ENCODE measurements at regions of chr10 and their contacts with region 1.

Region 1: GRCh38 chr10:8829588-8829987 is 775.1 kb downstream of the GATA3 start:
- DNase-seq: no peak
- H3K4me3 ChIP-seq: no peak overlapping the region
- H3K27ac ChIP-seq: no peak overlapping the region
- H3K4me1 ChIP-seq: peaks cover 2% of the 10 kb centered on the region
- H3K27me3 ChIP-seq: no peaks in the 10 kb centered on the region
- CTCF ChIP-seq: no peak
- POLR2A ChIP-seq: no peak

Region 2: DNA sequence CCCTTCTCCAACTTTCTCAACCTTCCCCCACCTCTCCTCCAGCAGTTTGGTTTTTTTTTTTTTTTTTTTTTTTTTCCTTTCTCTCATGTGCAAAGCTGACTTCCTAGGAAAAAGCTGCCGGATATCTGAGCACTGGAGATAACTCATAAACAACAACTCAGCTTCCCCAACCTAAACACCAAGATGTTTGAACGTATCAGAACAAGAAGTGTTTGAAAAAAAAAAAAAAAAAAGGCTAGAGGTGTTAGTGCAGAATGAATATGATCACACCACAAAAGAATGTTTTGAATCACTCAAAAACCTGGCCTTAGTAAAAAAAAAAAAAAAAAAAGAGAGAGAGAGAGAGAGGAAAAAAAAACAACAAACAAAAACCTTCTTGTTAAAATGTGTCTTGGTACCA is 763.9 kb before region 1 on chr10:
- CTCF ChIA-PET with region 1: no interaction called
- POLR2A ChIA-PET with region 1: no interaction called
- dilution Hi-C with region 1: no loop called
- intact Hi-C with region 1: loop called (anchors 1 kb)
- DNase-seq: peak; percentile 98
- H3K4me3 ChIP-seq: peak overlapping the region in 1 of 3 experiments; percentile 37
- H3K27ac ChIP-seq: peak overlapping the region; percentile 86
- H3K4me1 ChIP-seq: peaks cover 63% of the 10 kb centered on the region
- H3K27me3 ChIP-seq: no peaks in the 10 kb centered on the region
- CTCF ChIP-seq: no peak
- POLR2A ChIP-seq: peak; percentile 64

Region 3: GRCh38 chr10:8790381-8790780 is 39.2 kb before region 1 on chr10:
- CTCF ChIA-PET with region 1: no interaction called
- POLR2A ChIA-PET with region 1: no interaction called
- dilution Hi-C with region 1: no loop called
- intact Hi-C with region 1: loop called (anchors 1 kb)
- DNase-seq: peak; percentile 11
- H3K4me3 ChIP-seq: no peak overlapping the region
- H3K27ac ChIP-seq: no peak overlapping the region
- H3K4me1 ChIP-seq: no peaks in the 10 kb centered on the region
- H3K27me3 ChIP-seq: no peaks in the 10 kb centered on the region
- CTCF ChIP-seq: no peak
- POLR2A ChIP-seq: no peak

Region 4: DNA sequence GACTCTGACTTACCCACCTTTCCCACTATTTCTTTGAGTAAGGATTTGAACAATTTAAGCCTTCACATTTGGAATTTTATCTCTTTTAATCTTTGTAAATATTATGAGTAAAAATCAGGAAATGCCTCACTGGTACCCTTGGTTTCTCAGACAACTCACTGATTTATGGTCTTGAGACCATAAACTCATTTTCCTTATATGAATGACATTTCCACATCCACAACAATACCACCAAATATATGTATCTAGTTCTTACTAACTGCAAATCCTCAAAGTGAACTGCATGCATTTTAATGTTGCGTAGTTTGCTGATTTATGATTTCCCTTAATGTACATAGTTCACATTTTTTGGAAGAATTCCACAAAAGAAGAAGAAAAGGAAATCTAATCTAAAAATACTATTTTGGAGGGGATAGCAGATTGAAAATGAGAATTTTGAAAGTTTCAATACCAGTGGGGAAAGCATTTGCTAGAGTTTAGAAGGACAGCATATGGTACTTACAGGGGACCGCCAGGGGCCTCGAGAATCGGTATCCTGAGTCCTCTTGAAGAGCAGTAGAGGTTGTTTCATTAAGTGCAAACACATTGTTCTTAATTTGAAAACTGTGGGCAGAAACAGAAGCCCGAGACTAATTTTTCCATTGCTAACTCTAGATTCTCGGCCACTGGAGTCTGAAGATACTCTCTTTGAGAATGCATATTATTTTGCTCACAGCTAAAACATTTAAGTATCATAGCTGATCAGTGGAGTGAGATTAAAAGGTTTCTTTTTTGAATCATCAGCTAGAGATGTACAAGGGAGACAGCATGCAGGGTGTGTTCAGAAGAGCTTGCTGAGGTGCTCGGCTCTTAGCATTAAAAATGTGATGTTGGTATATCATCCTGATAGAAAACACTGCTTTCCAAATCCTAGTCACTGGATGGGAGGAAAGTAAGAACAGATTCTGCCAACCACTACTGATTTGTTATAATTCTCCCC is 188.9 kb after region 1 on chr10:
- CTCF ChIA-PET with region 1: no interaction called
- POLR2A ChIA-PET with region 1: no interaction called
- dilution Hi-C with region 1: no loop called
- intact Hi-C with region 1: loop called (anchors 1 kb)
- DNase-seq: peak; percentile 91
- H3K4me3 ChIP-seq: no peak overlapping the region
- H3K27ac ChIP-seq: peak overlapping the region; percentile 45
- H3K4me1 ChIP-seq: peaks cover 15% of the 10 kb centered on the region
- H3K27me3 ChIP-seq: no peaks in the 10 kb centered on the region
- CTCF ChIP-seq: no peak
- POLR2A ChIP-seq: no peak

Region 5: DNA sequence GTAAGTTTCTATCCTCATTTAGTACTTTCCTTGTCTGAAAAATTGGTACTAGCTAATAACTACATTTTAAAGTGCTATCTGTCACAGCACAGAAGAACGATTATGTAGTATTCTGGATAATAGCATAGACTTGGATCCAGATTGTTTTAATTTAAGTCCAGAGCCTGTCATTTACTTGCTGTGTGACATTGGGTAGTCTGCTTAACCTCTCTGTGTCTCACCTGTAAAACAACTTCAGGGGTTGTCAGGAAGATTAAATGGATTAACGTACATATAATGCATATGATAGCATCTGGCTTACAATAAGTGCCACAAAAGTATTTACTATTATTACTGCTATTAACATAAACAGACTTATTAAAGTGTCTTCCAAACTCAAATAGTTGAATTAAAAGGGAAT is 446.3 kb after region 1 on chr10:
- CTCF ChIA-PET with region 1: no interaction called
- POLR2A ChIA-PET with region 1: no interaction called
- dilution Hi-C with region 1: no loop called
- intact Hi-C with region 1: no loop called
- DNase-seq: no peak
- H3K4me3 ChIP-seq: no peak overlapping the region
- H3K27ac ChIP-seq: no peak overlapping the region
- H3K4me1 ChIP-seq: no peaks in the 10 kb centered on the region
- H3K27me3 ChIP-seq: no peaks in the 10 kb centered on the region
- CTCF ChIP-seq: no peak
- POLR2A ChIP-seq: no peak